Keratinocyte (primary cell): ENCODE measurements at regions of chr14 and their contacts with region 1.

Region 1: DNA sequence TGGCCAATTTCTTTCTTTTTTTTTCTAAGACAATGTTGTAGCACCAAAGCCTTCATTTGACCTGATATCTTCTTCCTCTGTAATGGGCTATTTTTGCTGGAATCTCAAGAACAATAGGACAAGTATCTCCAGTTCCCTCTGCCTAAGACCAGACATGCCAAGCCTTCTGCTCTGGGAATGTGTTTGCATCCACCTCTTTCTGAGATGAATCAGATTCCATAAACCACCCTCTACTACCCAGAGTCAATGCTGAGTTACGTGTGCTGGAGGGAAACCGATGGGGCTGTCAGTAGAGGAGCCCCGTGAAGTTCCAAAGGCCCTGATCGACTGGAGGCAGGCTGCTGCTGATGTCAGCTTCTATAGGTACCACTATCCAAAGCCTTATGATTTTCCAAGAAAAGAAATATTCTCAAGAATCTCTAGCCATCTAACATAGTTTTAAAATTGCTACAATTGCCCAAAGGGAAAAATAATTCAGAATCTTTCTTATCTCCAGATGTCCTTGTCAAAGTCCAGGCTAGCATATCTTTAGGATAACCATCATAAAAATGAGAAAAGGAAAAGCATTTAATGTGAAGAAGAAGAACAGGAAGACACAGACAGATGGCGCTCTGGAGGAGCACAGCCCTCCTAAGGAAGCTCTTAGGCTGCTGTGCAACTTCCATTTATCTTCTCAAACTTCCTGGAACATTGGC is 101.9 kb downstream of the SLC8A3 start:
- DNase-seq: no peak
- H3K4me3 ChIP-seq: no peak overlapping the region
- H3K27ac ChIP-seq: no peak overlapping the region
- H3K4me1 ChIP-seq: no peaks in the 10 kb centered on the region
- H3K27me3 ChIP-seq: peaks cover 17% of the 10 kb centered on the region
- CTCF ChIP-seq: peak; percentile 53 to 73 (median 68)

Region 2: DNA sequence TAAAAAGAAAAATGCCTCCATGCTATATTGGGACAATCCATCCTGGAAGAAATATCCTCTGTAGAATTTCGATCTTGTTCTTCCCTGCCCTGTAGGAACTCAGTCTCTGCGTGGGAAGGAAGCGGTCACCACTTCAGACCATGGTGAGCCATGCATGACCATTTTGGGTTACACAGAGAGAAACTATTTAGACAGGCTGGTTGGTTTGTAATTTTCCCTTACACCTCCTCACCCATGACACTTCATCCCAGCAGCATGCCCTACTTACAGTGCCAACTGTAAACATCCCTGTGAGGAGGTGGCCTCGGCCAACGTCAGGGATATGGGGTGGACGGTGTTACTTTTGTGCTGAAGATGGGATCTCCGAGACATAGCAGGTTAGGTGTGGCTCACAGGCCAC is 86.2 kb before region 1 on chr14:
- dilution Hi-C with region 1: no loop called
- DNase-seq: no peak
- H3K4me3 ChIP-seq: no peak overlapping the region
- H3K27ac ChIP-seq: peak overlapping the region; percentile 98
- H3K4me1 ChIP-seq: peaks cover 53% of the 10 kb centered on the region
- H3K27me3 ChIP-seq: no peaks in the 10 kb centered on the region
- CTCF ChIP-seq: no peak

Region 3: DNA sequence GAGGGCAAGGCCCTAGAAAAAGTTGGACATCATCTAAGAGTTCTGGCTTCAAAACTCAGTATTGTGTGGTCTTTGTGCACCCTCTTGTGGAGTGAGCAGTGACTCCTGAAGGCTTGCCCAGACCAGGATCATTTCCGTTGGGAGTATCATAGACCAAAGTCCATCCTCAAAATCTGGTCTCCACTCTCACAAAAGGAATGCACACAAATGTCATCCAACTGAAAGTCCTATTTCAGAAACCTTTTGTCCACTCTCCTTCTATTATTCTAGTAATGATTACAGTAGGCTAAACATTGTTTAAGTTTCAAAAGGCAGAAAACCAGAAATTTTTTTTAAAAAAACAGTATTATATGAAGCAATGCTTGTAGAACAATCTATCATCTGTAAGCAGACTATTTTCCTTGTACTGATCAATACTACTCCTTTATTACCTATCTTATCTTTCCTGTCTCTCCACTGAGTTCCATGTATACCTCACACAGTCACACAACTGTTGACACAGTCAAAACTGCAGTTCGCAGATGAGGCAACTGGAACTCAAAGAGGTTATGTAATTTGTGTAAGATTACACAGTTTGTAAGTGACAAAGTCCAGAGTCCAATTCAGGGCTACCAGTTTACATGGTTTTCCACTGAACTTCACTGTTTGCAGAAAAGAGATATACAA is 231.3 kb after region 1 on chr14:
- dilution Hi-C with region 1: loop called (anchors 25 kb)
- DNase-seq: no peak
- H3K4me3 ChIP-seq: no peak overlapping the region
- H3K27ac ChIP-seq: no peak overlapping the region
- H3K4me1 ChIP-seq: peaks cover 11% of the 10 kb centered on the region
- H3K27me3 ChIP-seq: no peaks in the 10 kb centered on the region
- CTCF ChIP-seq: peak; percentile 62 to 75 (median 63)